RWPE1 (cell line): ENCODE measurements at regions of chr12 and their contacts with region 1.

Region 1: DNA sequence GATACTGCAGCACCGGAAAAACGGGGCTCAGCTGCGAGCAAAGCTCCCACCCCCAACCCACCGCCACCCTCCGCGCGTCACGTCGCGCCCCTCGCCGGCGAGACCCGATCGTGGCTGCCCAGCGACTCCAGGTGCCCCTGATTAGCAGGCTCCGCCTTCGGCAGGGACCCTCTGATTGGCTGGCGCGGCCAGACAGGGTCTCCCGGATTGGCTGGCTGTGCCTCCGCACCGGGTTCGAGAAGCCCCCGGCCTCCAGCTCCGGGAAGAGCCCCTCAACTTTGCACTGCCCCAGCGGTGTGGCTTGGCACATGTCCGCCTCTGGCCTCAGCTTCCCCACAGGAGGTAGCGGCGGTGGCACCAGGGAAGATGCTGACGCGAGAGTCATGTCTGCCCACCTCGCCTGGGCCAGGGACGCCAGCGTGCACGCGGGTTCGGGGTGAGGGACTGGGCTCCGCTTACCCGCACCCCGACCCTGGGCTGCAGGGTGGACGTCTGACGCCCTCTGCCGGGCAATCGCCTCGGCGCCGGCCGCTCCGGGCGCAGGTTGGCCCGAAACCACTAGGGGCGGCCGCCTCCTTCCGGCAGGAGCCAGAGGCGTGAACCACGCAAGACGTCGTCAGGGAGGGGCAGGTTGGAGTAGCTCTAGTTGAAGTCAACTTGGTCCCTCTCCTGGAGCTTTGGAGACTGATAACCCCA is 498 bp upstream of the RHOF start:
- DNase-seq: peak; percentile 85
- H3K27ac ChIP-seq: peak overlapping the region; percentile 100
- CTCF ChIP-seq: peak; percentile 98

Region 2: DNA sequence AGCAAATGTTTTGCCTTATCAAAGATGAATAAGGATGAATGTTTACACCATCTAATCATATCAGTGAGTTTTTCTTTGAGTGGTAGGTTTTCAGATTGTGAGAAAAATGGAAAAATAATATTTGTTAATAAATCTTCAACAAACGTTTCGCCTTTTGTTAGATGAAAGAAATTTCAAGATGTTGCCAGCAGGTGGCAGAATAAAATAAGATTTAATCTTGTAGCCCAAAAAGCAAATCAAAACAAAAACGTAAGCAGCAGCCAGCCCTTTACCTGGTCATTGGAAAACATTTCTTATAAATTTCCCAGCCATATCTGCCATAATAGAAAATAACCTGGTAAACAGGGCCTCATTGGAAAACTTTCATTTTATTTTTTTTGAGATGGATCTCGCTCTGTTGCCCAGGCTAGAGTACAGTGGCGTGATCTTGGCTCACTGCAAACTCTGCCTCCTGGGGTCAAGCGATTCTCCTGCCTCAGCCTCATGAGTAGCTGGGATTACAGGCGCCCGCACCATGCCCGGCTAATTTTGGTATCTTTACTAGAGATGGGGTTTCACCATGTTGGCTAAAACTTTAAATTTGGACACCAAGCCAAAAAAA is 96.8 kb before region 1 on chr12:
- CTCF ChIA-PET with region 1: interaction called, 22 read pairs
- POLR2A ChIA-PET with region 1: no interaction called
- DNase-seq: peak; percentile 48
- H3K27ac ChIP-seq: no peak overlapping the region
- CTCF ChIP-seq: peak; percentile 42

Region 3: DNA sequence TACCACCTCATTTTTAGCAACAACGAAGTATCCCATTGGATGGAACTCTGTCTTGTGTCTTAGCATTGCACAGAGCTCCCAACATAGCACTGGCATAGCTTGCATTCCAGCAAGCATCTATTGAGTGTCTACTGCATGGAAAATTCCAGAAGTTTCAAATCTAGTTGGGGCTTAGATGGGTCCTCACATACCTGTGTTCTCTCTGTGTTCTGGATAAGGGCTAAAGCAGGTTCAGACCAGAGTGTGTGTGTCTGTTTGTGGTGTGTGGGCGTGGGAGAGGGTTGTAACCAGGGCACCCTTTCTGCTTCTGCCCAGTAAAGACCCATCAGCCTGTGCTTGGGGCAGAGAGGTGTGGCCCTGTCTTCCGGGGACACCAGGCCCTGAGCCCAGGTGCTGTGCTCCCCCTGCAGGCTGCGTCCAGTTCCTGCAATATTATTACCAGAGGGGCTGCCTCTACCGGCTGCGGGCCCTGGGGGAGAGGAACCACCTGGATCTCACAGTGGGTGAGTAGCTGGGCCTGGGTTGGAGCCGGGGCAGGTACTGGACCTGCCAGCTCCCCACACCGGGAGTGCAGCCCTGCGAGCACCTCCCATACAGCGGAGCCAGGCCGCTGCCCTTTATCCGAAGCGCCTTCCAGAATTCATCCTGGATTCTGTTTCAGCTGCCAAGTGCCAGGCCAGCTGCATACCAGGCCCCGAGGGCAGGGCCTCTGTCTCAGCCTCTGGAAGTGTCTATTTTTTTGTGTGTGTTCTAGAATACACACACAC is 20.8 kb before region 1 on chr12:
- CTCF ChIA-PET with region 1: interaction called, 155 read pairs
- POLR2A ChIA-PET with region 1: no interaction called
- DNase-seq: peak; percentile 86
- H3K27ac ChIP-seq: peak overlapping the region; percentile 57
- CTCF ChIP-seq: peak; percentile 89

Region 4: GRCh38 chr12:121811434-121812319 is 17.7 kb after region 1 on chr12:
- CTCF ChIA-PET with region 1: interaction called, 212 read pairs
- POLR2A ChIA-PET with region 1: interaction called, 12 read pairs
- DNase-seq: no peak
- H3K27ac ChIP-seq: peak overlapping the region; percentile 99
- CTCF ChIP-seq: peak; percentile 96

Region 5: DNA sequence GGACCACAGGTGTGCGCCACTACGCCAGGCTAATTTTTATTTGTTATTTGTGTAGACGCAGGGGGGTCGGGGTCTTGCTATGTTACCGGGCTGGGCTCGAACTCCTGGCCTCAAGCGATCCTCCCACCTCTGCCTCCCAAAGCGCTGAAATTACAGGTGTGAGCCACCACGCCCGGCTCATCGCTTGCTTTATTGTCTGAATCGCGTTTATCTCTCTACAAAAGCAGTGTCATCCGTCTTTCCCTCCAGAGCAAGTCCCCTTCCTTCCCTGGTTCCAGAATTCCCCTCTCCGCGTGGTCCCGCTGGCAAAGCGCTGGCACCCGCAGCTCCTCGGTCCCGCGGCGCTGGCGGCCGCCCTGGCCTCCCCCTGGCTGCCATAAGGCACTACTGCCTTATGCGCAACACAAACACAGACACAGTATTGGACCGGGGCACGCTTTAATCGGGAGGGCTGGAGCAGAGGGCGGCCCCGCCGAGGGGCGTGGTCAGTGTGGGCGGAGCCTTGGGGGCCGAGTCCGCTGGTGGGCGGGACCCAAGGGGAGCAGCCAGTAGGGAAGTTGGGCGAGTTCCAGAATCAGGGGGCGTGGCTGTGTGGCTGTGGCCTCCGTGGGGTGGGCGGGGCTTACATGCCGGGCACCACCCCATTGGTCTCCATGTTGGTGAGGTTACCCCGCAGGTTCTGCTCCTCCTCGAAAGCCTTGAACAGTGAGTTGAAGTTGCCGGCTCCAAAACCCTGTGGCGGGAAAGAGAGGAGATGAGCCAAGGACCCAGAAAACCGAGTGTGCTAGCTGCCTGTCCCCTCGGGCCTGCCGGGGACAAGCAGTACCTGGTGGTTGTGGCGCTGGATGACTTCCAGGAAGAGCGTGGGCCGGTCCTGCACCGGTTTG is 45.4 kb after region 1 on chr12:
- CTCF ChIA-PET with region 1: interaction called, 11 read pairs
- POLR2A ChIA-PET with region 1: no interaction called
- DNase-seq: peak; percentile 99
- H3K27ac ChIP-seq: peak overlapping the region; percentile 77
- CTCF ChIP-seq: peak; percentile 26; the same call in 1 of the 2 replicates

Region 6: GRCh38 chr12:121888478-121889266 is 94.7 kb after region 1 on chr12 and contains the start of gene PSMD9:
- CTCF ChIA-PET with region 1: interaction called, 32 read pairs
- POLR2A ChIA-PET with region 1: interaction called, 3 read pairs
- DNase-seq: peak; percentile 97
- H3K27ac ChIP-seq: peak within 1 kb of the TSS; percentile 92
- CTCF ChIP-seq: peak; percentile 69

Region 7: GRCh38 chr12:121964813-121965643 is 171.0 kb after region 1 on chr12:
- CTCF ChIA-PET with region 1: no interaction called
- POLR2A ChIA-PET with region 1: no interaction called
- DNase-seq: peak; percentile 50
- H3K27ac ChIP-seq: peak overlapping the region; percentile 64
- CTCF ChIP-seq: no peak

Region 8: DNA sequence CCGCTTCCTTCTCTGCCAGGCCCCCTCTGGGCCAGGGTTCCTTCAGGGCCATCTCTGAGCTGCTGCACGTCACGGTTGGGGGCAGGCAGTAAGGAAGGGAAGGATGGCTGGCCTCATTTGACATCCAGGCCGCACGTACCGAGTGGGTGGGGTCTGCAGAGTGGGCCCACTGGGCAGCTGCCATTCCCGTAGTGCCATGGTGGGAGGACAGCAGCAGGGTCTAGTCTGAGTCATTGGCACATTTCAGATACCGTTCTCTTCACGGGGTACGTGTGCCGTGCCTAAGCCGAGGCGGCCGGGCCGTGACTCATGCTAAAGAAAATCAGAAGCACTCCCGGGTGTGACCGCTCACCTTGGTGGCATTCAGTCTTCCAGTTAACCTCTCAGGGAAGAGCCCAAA is 336.2 kb after region 1 on chr12:
- CTCF ChIA-PET with region 1: no interaction called
- POLR2A ChIA-PET with region 1: no interaction called
- DNase-seq: peak; percentile 71
- H3K27ac ChIP-seq: peak overlapping the region; percentile 80
- CTCF ChIP-seq: no peak